Naive thymus-derived CD4-positive, alpha-beta T cell (primary cell): ENCODE measurements at regions of chr17 and their contacts with region 1.

Region 1: DNA sequence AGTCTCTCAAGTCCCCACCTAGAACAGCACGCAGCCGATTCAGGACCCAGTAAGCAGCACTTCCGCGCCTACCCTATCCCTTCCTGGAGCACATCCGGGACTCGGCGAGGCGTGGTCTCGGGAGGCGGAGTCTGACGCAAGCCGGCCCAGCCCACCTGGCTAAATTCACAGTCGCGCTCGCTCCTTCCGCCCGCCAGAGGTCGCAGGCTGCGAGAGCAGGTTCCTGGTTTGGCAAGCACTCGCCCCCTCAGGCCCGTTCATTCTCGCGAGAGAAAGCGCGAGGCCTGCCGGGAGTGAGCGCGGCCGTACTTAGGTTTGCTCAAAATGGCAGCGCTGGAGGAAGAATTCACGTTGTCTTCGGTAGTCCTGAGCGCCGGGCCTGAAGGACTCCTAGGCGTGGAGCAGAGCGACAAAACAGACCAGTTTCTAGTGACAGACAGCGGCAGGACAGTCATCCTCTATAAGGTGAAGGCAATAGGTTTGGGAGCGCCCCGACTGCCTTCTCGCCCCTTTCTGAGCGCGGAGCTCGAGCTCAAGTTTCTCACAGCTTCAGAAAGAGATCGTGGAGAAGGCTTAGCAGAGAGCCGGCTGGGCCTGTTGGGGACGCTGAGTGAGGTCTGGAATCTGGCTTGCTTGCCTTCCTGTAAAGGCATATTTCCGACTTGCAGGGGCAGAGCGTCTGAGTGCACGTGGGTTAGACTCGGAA is at the start of gene NOL11:
- DNase-seq: peak; percentile 97 to 100 (median 99)
- ATAC-seq: peak; percentile 98
- H3K4me3 ChIP-seq: peak within 1 kb of the TSS; percentile 96
- H3K4me3 Mint-ChIP-seq: peak within 1 kb of the TSS; percentile 95 to 100 (median 100)
- H3K27ac ChIP-seq: peak within 1 kb of the TSS; percentile 95
- H3K27ac Mint-ChIP-seq: peak within 1 kb of the TSS; percentile 96 to 100 (median 99)
- H3K4me1 ChIP-seq: peaks cover 14 to 20% of the 10 kb centered on the region in 2 donors
- H3K4me1 Mint-ChIP-seq: peaks cover 7 to 47% (median 28%) of the 10 kb centered on the region in 7 donors
- H3K27me3 ChIP-seq: no peaks in the 10 kb centered on the region
- H3K27me3 Mint-ChIP-seq: peaks cover 0 to 5% (median 0%) of the 10 kb centered on the region in 5 donors
- total RNA-seq, gene NOL11: 50.0 to 72.9 (median 65.1) TPM

Region 2: GRCh38 chr17:67245073-67245755 is 472.6 kb before region 1 on chr17 and contains the start of gene HELZ:
- CTCF ChIA-PET with region 1: no interaction called
- POLR2A ChIA-PET with region 1: no interaction called
- intact Hi-C with region 1: loop called (anchors 1 kb)
- DNase-seq: peak; percentile 45 to 81 (median 79)
- ATAC-seq: peak; percentile 89
- H3K4me3 ChIP-seq: peak within 1 kb of the TSS; percentile 83
- H3K4me3 Mint-ChIP-seq: peak within 1 kb of the TSS; percentile 87 to 95 (median 90)
- H3K27ac ChIP-seq: peak within 1 kb of the TSS; percentile 84
- H3K27ac Mint-ChIP-seq: peak within 1 kb of the TSS; percentile 81 to 96 (median 90)
- H3K4me1 ChIP-seq: peaks cover 11 to 49% of the 10 kb centered on the region in 2 donors
- H3K4me1 Mint-ChIP-seq: peaks cover 31 to 52% (median 48%) of the 10 kb centered on the region in 7 donors
- H3K27me3 ChIP-seq: no peaks in the 10 kb centered on the region
- H3K27me3 Mint-ChIP-seq: peaks cover 0 to 5% (median 0%) of the 10 kb centered on the region in 5 donors
- total RNA-seq, gene HELZ: 68.6 to 114 (median 89.3) TPM

Region 3: DNA sequence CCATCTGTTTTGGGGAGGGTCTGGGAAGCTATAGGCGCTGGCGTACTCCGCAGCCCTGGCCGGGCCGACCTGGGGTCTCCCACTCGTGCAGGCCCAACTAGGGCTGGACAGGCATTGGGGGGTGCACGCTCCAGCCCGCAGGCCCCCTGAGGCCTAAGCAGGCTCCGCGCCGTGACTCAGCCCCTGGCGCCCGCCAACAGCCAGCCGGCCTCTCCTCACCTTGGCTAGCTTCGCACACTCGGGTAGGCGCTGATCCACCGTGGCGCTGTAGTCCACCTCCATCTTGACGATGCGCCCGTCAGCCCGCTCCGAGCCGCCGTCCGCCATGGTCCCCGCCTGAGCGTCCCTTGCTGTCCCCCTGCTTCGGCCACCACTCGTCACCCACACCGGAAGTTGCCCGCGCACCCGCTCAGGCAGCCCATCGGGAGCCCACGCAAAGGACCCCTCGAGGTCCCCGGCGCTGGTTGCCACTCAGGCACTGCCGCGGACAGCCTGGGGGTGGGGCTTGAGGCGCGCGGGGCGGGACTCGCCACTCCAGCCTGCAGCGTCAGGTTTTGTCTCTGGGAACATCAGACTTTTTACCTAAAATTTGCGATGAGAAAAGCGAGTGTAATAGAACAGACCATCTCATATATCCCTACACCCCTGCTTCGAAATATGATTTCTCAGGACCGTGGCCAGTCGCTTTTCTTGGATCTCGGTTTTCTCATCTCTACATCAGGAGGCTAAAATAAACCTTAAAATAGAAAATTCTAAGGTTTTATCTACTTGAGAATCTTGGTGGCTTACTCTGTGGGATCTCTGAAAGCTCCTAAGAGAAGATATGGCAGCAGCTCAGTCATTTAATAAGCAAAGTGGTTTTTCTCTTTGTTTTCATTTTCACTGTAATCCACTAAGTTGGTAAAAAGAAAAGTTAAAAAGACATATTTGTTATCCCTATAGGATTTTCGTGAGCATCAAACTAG is 351.3 kb before region 1 on chr17 and contains the start of gene PSMD12:
- CTCF ChIA-PET with region 1: no interaction called
- POLR2A ChIA-PET with region 1: interaction called, 10 read pairs
- intact Hi-C with region 1: loop called (anchors 1 kb)
- DNase-seq: peak; percentile 86 to 96 (median 93)
- ATAC-seq: peak; percentile 99
- H3K4me3 ChIP-seq: peak within 1 kb of the TSS; percentile 76
- H3K4me3 Mint-ChIP-seq: peak within 1 kb of the TSS; percentile 91 to 99 (median 96)
- H3K27ac ChIP-seq: peak within 1 kb of the TSS; percentile 89
- H3K27ac Mint-ChIP-seq: peak within 1 kb of the TSS; percentile 82 to 99 (median 96)
- H3K4me1 ChIP-seq: peaks cover 22 to 25% of the 10 kb centered on the region in 2 donors
- H3K4me1 Mint-ChIP-seq: peaks cover 32 to 51% (median 47%) of the 10 kb centered on the region in 7 donors
- H3K27me3 ChIP-seq: no peaks in the 10 kb centered on the region
- H3K27me3 Mint-ChIP-seq: no peaks in the 10 kb centered on the region
- total RNA-seq, gene PSMD12: 35.8 to 54.4 (median 40.5) TPM

Region 4: DNA sequence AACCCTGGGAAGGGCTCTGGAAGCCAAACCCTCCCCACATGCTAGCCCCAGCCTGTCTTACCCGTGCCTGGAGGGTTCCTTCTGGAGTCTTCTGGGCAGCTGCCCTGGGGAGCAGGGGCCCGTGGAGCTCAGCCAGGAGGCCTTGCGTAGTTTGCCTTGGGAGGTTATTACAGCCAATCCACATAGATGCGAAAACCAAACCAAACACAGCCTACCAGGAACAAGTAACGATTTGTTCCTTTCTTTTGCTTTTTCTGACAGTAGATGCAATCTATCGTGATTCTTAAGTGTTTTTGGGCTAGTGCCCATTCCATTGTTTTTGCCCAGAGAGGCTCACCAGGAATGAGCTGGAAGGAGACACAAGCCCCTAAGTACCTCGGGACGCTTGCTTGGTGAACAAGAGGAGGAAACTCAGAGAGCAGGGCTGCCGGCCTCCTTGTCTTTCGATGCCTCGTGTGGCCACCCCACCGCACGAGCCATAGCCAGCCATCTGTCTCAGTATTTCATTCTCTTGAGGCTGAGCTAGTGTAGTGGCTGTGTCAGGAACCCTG is 102.7 kb before region 1 on chr17:
- CTCF ChIA-PET with region 1: no interaction called
- POLR2A ChIA-PET with region 1: no interaction called
- intact Hi-C with region 1: no loop called
- DNase-seq: no peak
- ATAC-seq: no peak
- H3K4me3 ChIP-seq: no peak overlapping the region
- H3K4me3 Mint-ChIP-seq: no peak overlapping the region
- H3K27ac ChIP-seq: no peak overlapping the region
- H3K27ac Mint-ChIP-seq: peak overlapping the region in 2 of 9 donors; percentile 56 to 75
- H3K4me1 ChIP-seq: no peaks in the 10 kb centered on the region
- H3K4me1 Mint-ChIP-seq: peaks cover 10 to 45% (median 33%) of the 10 kb centered on the region in 7 donors
- H3K27me3 ChIP-seq: no peaks in the 10 kb centered on the region
- H3K27me3 Mint-ChIP-seq: no peaks in the 10 kb centered on the region

Region 5: GRCh38 chr17:67707442-67707841 is 10.3 kb before region 1 on chr17:
- CTCF ChIA-PET with region 1: interaction called, 3 read pairs
- POLR2A ChIA-PET with region 1: interaction called, 15 read pairs
- intact Hi-C with region 1: no loop called
- DNase-seq: no peak
- ATAC-seq: no peak
- H3K4me3 ChIP-seq: no peak overlapping the region
- H3K4me3 Mint-ChIP-seq: no peak overlapping the region
- H3K27ac ChIP-seq: no peak overlapping the region
- H3K27ac Mint-ChIP-seq: no peak overlapping the region
- H3K4me1 ChIP-seq: no peaks in the 10 kb centered on the region
- H3K4me1 Mint-ChIP-seq: no peaks in the 10 kb centered on the region
- H3K27me3 ChIP-seq: no peaks in the 10 kb centered on the region
- H3K27me3 Mint-ChIP-seq: peaks cover 0 to 12% (median 0%) of the 10 kb centered on the region in 5 donors

Region 6: DNA sequence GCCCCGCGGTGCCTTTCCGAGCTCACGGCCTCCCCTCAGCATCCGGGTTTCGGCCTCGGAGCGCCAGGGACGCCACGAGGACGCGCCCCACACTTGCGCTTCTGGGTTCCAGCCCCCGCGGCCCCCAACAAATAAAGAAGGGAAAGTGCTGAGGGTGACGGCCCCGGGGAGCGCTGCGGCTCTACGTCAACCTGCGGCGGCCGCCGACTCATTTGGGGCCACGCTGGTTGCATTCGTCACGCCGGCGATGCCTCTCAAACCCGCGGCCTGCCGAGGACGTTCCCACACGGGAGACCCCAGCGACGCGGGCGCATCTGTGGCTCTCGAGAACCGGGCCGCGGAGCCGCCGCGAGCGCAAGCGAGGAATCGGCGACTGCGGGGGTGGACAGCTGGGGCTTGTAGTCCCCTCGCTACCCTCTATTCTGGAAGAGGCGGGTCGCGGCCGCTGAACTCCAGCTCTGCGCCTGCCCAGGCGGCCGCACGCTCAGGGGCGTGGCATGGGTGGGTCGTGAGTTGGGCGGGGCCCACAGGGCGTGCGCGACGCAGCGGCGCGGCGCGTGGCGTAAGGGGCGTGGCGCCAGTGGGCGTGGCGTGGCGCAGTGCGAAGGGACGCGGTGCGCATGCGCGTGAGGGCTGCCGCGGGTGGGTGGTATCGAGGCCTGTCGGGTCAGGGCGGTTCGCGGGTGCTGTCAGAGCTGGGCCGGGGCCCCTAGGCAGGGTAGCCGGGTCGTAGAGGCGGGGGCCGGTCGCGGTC is 529.8 kb after region 1 on chr17 and contains the start of gene AMZ2:
- CTCF ChIA-PET with region 1: no interaction called
- POLR2A ChIA-PET with region 1: interaction called, 3 read pairs
- intact Hi-C with region 1: loop called in 1 of 2 experiments (anchors 5 kb)
- DNase-seq: peak; percentile 92 to 100 (median 97)
- ATAC-seq: peak; percentile 96
- H3K4me3 ChIP-seq: peak within 1 kb of the TSS; percentile 89
- H3K4me3 Mint-ChIP-seq: peak within 1 kb of the TSS; percentile 80 to 96 (median 92)
- H3K27ac ChIP-seq: peak within 1 kb of the TSS; percentile 99
- H3K27ac Mint-ChIP-seq: peak within 1 kb of the TSS; percentile 78 to 99 (median 97)
- H3K4me1 ChIP-seq: peaks cover 18 to 36% of the 10 kb centered on the region in 2 donors
- H3K4me1 Mint-ChIP-seq: peaks cover 11 to 52% (median 31%) of the 10 kb centered on the region in 7 donors
- H3K27me3 ChIP-seq: no peaks in the 10 kb centered on the region
- H3K27me3 Mint-ChIP-seq: no peaks in the 10 kb centered on the region
- total RNA-seq, gene AMZ2: 47.6 to 85.5 (median 73.8) TPM

Region 7: GRCh38 chr17:68512247-68512982 is 794.6 kb after region 1 on chr17 and contains the start of gene PRKAR1A:
- CTCF ChIA-PET with region 1: no interaction called
- POLR2A ChIA-PET with region 1: interaction called, 3 read pairs
- intact Hi-C with region 1: loop called (anchors 1 kb)
- DNase-seq: peak; percentile 84 to 96 (median 94)
- ATAC-seq: peak; percentile 92
- H3K4me3 ChIP-seq: peak within 1 kb of the TSS; percentile 97
- H3K4me3 Mint-ChIP-seq: peak within 1 kb of the TSS; percentile 89 to 100 (median 100)
- H3K27ac ChIP-seq: peak within 1 kb of the TSS; percentile 98
- H3K27ac Mint-ChIP-seq: peak within 1 kb of the TSS; percentile 91 to 100 (median 100)
- H3K4me1 ChIP-seq: peaks cover 13 to 22% of the 10 kb centered on the region in 2 donors
- H3K4me1 Mint-ChIP-seq: peaks cover 34 to 74% (median 51%) of the 10 kb centered on the region in 7 donors
- H3K27me3 ChIP-seq: no peaks in the 10 kb centered on the region
- H3K27me3 Mint-ChIP-seq: no peaks in the 10 kb centered on the region
- total RNA-seq, gene PRKAR1A: 115 to 224 (median 156) TPM